B cell (primary cell): ENCODE measurements at regions of chr20 and their contacts with region 1.

Region 1: DNA sequence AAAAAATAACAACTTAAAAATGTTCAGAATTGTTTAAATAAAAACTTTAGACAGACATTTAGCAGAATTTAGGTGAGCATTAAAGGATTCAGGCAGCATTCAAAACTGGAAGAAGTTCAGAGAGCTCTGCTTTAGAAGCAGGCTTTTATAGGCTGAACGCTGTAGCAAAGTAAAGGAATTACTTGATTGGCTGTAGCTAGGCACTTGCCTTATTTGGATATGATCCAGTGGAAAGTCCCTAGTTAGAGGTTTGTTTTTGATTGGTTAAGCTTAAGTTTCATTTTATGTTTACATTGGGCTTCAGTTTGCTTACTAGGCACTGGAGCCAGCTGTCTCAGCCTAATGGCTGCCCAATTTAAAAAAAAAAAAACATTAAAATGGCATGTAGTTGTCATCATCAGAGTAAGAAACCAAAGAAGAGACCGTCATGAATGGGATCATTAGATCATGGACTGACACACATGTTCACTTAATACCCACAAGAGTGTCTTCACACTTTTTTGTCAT is 65.1 kb downstream of the CBFA2T2 start:
- DNase-seq: peak; percentile 90
- ATAC-seq: peak; percentile 96
- H3K4me3 ChIP-seq: peak overlapping the region in 2 of 5 experiments; percentile 24 to 40
- H3K4me3 Mint-ChIP-seq: peak overlapping the region; percentile 79
- H3K27ac ChIP-seq: peak overlapping the region; percentile 92 to 97
- H3K27ac Mint-ChIP-seq: peak overlapping the region; percentile 96
- H3K4me1 ChIP-seq: peaks cover 28 to 31% of the 10 kb centered on the region in 2 donors
- H3K4me1 Mint-ChIP-seq: peaks cover 34% of the 10 kb centered on the region
- H3K27me3 ChIP-seq: no peaks in the 10 kb centered on the region
- H3K27me3 Mint-ChIP-seq: no peaks in the 10 kb centered on the region
- CTCF ChIP-seq: no peak

Region 2: DNA sequence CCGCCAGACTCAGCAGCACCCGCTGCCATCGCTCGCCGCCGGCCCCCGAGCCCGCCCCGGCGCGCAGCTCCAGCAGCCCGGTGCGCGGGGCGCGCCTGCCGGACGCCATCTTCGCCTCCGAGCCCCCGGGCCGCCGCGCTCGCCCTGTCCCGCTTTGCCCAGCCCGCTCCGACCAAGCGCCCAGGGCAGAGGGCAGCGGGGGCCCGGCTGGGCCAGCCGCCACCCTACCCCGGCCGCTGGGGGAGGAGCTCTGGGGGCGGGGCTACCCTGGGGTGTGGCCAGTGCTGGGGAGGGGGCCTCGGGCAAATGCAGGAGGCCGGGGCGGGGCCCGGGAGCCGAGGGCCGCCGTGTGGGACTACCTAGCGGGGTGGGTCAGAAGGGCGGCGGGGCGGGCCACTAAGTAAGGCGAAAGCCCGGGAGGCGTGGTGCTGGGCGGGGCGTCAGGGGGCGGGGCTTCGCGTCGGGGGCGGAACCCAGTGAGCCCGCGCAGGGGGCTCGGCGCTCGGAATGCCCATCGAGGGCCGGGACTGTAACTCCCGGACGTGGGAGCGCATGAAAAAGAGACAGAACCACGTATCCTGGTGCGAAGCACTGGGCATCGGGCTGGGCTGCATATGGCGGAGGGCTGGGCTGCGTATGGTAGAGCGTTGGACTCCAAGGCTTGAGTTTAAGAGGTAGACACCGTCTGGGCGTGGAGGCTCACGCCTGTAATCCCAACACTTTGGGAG is 111.3 kb before region 1 on chr20 and contains the start of gene SNTA1:
- CTCF ChIA-PET with region 1: no interaction called
- POLR2A ChIA-PET with region 1: interaction called, 5 read pairs
- intact Hi-C with region 1: loop called (anchors 1 kb)
- DNase-seq: peak; percentile 90
- ATAC-seq: peak; percentile 89
- H3K4me3 ChIP-seq: peak within 1 kb of the TSS; percentile 70 to 87 (median 80)
- H3K4me3 Mint-ChIP-seq: peak within 1 kb of the TSS; percentile 94
- H3K27ac ChIP-seq: peak within 1 kb of the TSS; percentile 51 to 58
- H3K27ac Mint-ChIP-seq: peak within 1 kb of the TSS; percentile 91
- H3K4me1 ChIP-seq: peaks cover 13 to 23% of the 10 kb centered on the region in 2 donors
- H3K4me1 Mint-ChIP-seq: peaks cover 31% of the 10 kb centered on the region
- H3K27me3 ChIP-seq: no peaks in the 10 kb centered on the region
- H3K27me3 Mint-ChIP-seq: no peaks in the 10 kb centered on the region
- CTCF ChIP-seq: no peak
- total RNA-seq, gene SNTA1: 9.9 and 11.5 TPM in 2 replicates

Region 3: DNA sequence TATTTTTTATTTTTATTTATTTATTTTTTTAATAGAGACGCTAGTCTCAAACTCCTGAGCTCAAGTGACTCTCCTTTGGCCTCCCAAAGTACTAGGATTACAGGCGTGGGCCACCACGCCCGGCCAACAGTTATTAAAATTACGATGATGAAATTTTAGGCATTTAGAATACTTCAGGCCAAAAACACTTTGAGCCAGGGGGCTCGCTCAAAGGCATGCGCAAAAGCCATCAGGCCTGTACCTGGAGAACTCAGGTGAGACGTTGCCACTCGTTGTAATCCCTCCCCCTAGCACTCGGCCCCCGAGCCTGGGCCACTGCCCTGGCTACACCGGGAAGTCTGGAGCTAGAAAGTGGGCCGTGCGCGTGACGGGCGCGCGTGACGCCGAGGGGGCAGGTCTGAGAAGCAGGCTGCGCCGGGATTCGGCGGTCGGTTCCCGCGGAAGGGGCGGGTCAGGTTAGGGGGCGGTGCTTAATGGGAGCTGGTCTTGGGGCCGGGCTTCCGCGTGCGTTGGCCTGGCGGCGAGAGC is 65.4 kb before region 1 on chr20:
- CTCF ChIA-PET with region 1: no interaction called
- POLR2A ChIA-PET with region 1: no interaction called
- intact Hi-C with region 1: loop called (anchors 1 kb)
- DNase-seq: peak; percentile 99
- ATAC-seq: peak; percentile 97
- H3K4me3 ChIP-seq: peak overlapping the region; percentile 24 to 73 (median 68)
- H3K4me3 Mint-ChIP-seq: peak overlapping the region; percentile 93
- H3K27ac ChIP-seq: peak overlapping the region; percentile 97 to 99
- H3K27ac Mint-ChIP-seq: peak overlapping the region; percentile 95
- H3K4me1 ChIP-seq: peaks cover 9 to 19% of the 10 kb centered on the region in 2 donors
- H3K4me1 Mint-ChIP-seq: peaks cover 16% of the 10 kb centered on the region
- H3K27me3 ChIP-seq: no peaks in the 10 kb centered on the region
- H3K27me3 Mint-ChIP-seq: no peaks in the 10 kb centered on the region
- CTCF ChIP-seq: no peak

Region 4: DNA sequence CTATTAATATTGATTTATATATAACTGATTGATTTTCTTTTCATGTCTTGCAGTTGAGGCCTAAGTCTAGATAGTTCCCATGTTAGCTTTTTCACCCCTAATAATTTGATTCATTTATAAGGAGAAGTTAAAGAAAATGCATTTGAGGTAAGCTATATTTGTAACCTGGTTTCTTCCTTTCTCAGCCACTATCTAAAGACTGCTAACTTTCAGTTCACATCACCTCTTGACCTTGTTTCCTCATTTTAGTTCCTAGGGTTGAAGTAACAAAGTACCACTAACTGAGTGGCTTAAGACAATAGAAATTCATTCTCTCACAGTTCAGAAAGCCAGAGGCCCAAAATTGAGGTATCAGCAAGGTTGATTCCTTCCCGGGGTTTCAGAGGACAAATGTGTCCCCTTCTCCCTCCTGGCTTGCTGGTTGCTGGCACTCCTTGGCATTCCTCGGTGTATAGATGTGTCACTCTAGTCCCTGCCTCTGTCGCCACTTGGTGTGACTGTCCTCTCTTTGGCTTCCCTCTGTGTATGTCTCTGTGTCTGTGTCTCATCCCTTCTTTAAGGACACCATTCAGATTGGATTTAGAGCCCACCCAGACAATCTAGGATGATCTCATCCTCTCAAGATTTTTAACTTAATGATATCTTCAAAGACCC is 51.3 kb after region 1 on chr20:
- CTCF ChIA-PET with region 1: no interaction called
- POLR2A ChIA-PET with region 1: interaction called, 3 read pairs
- intact Hi-C with region 1: loop called (anchors 2 kb)
- DNase-seq: peak; percentile 63
- ATAC-seq: peak; percentile 53
- H3K4me3 ChIP-seq: no peak overlapping the region
- H3K4me3 Mint-ChIP-seq: peak overlapping the region; percentile 62
- H3K27ac ChIP-seq: peak overlapping the region; percentile 56 to 88
- H3K27ac Mint-ChIP-seq: peak overlapping the region; percentile 92
- H3K4me1 ChIP-seq: peaks cover 72 to 82% of the 10 kb centered on the region in 2 donors
- H3K4me1 Mint-ChIP-seq: peaks cover 74% of the 10 kb centered on the region
- H3K27me3 ChIP-seq: no peaks in the 10 kb centered on the region
- H3K27me3 Mint-ChIP-seq: no peaks in the 10 kb centered on the region
- CTCF ChIP-seq: no peak

Region 5: GRCh38 chr20:34452281-34452982 is 897.5 kb after region 1 on chr20:
- CTCF ChIA-PET with region 1: no interaction called
- POLR2A ChIA-PET with region 1: interaction called, 11 read pairs
- intact Hi-C with region 1: no loop called
- DNase-seq: no peak
- ATAC-seq: no peak
- H3K4me3 ChIP-seq: no peak overlapping the region
- H3K4me3 Mint-ChIP-seq: no peak overlapping the region
- H3K27ac ChIP-seq: no peak overlapping the region
- H3K27ac Mint-ChIP-seq: no peak overlapping the region
- H3K4me1 ChIP-seq: no peaks in the 10 kb centered on the region
- H3K4me1 Mint-ChIP-seq: no peaks in the 10 kb centered on the region
- H3K27me3 ChIP-seq: no peaks in the 10 kb centered on the region
- H3K27me3 Mint-ChIP-seq: no peaks in the 10 kb centered on the region
- CTCF ChIP-seq: no peak